A549 (cell line): ENCODE measurements at regions of chr4 and their contacts with region 1.

Region 1: GRCh38 chr4:118367361-118367760 is 14.6 kb upstream of the PRSS12 start:
- DNase-seq: no peak
- ATAC-seq: no peak
- H3K4me3 ChIP-seq: no peak overlapping the region
- H3K27ac ChIP-seq: no peak overlapping the region
- H3K4me1 ChIP-seq: no peaks in the 10 kb centered on the region
- CTCF ChIP-seq: no peak
- EP300 ChIP-seq: no peak
- POLR2A ChIP-seq: no peak
- RAD21 ChIP-seq: no peak

Region 2: GRCh38 chr4:118352843-118353533 is 14.4 kb before region 1 on chr4 and contains the start of gene PRSS12:
- CTCF ChIA-PET with region 1: interaction called, 13 read pairs
- POLR2A ChIA-PET with region 1: no interaction called
- DNase-seq: peak; percentile 47 to 56
- ATAC-seq: peak; percentile 97 to 99
- H3K4me3 ChIP-seq: peak within 1 kb of the TSS; percentile 70
- H3K27ac ChIP-seq: peak within 1 kb of the TSS; percentile 51 to 81; a peak in 5 of 6 replicates
- H3K4me1 ChIP-seq: no peaks in the 10 kb centered on the region
- CTCF ChIP-seq: peak; percentile 61
- EP300 ChIP-seq: no peak
- POLR2A ChIP-seq: no peak
- RAD21 ChIP-seq: peak in 1 of 2 experiments; percentile 36; a peak in 2 of 5 replicates
- polyA plus RNA-seq, gene PRSS12: 0.19 and 0.34 TPM in 2 replicates

Region 3: GRCh38 chr4:118398226-118399090 is 31.1 kb after region 1 on chr4:
- CTCF ChIA-PET with region 1: no interaction called
- POLR2A ChIA-PET with region 1: no interaction called
- DNase-seq: no peak
- ATAC-seq: no peak
- H3K4me3 ChIP-seq: no peak overlapping the region
- H3K27ac ChIP-seq: no peak overlapping the region
- H3K4me1 ChIP-seq: no peaks in the 10 kb centered on the region
- CTCF ChIP-seq: no peak
- EP300 ChIP-seq: no peak
- POLR2A ChIP-seq: no peak
- RAD21 ChIP-seq: no peak

Region 4: DNA sequence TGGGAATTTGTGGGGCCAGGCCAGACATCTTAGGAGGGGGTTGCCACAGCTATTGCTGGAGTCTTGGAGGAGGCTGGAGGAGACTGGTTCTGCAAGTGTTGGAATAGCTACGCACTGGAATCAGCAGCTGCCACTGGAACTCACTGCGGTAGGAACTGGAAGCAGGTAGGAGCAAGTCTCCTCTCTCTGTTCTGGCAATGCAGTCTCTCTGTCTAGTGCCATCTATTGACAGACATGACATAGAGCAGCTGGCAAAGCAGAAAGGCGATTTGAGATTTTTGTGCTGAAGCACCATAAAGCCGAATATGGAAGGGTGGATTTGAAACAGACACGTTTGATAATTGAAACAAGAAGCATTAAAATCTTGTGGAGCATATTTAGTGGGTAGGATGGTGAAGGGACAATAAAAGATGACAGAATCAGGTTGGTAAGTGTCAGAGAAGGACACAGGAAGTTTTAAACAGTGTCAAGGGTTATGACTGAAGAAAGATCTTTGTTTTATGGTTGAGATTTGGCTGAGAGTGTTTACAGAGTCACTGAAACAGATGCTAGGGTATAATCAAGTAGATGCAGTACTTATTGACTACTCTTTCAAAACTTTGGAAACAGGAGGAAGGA is 497.8 kb after region 1 on chr4:
- CTCF ChIA-PET with region 1: no interaction called
- POLR2A ChIA-PET with region 1: no interaction called
- DNase-seq: peak; percentile 49 to 50
- ATAC-seq: peak; percentile 81 to 92
- H3K4me3 ChIP-seq: no peak overlapping the region
- H3K27ac ChIP-seq: no peak overlapping the region
- H3K4me1 ChIP-seq: no peaks in the 10 kb centered on the region
- CTCF ChIP-seq: peak; percentile 50
- EP300 ChIP-seq: no peak
- POLR2A ChIP-seq: no peak
- RAD21 ChIP-seq: peak; percentile 16 to 32; a peak in 2 of 5 replicates